ENCODE measurements at regions of chr6 and their contacts with region 1.

Region 1: DNA sequence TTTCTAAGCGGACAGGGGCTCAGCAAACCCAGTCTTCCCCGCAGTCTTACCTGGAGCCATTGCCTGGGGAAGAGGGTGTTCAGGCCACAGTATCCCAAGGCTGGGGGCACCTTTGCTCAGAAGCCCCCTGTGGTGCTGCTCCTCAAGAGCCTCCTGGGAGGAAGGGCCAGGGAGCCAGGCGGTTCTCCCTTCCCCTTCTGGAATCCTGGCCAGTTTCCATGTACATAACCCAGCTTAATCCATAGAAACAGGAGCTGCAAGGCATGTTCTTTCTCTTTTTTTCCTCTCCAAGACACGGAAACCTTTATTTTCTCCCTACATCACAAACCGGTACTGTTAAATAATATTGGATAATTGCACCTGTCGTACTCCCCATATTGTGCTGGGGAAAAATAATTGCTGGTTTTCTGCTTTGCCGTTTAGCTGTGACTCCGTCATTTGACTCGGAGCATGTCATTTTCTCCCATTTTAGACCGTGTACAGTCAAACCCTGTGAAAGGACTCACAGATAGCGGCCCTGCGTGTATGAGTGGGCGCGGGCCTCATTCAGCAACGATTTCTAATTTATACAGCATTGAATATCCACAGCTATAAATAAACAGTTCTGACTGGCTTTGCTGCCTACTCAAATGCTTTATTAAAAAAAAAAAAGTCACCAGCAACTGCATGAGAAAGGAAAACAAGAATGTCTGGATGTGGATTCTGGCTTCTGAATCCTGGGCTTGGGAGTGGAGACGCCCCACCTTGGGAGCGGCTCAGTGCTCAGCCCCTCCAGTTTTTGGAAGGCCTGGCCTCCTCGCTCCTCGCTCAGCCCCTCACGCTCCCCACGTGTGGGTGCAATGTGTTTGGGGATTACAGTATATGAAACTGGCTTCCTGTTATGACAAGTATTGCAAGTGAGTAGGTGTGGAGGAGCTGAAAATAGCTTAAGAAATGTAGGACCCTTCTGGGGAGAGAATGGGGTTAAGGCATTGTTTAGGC is 67.3 kb downstream of the ADTRP start:
- DNase-seq: peak; percentile 30
- H3K4me3 Mint-ChIP-seq: peak overlapping the region; percentile 76
- H3K27ac Mint-ChIP-seq: peak overlapping the region; percentile 97
- H3K4me1 Mint-ChIP-seq: peaks cover 73% of the 10 kb centered on the region
- H3K27me3 Mint-ChIP-seq: no peaks in the 10 kb centered on the region

Region 2: GRCh38 chr6:10747251-10747972 is 963.9 kb before region 1 on chr6 and contains the start of gene TMEM14B:
- intact Hi-C with region 1: loop called (anchors 5 kb)
- DNase-seq: peak; percentile 100
- H3K4me3 Mint-ChIP-seq: peak within 1 kb of the TSS; percentile 93
- H3K27ac Mint-ChIP-seq: peak within 1 kb of the TSS; percentile 94
- H3K4me1 Mint-ChIP-seq: peaks cover 52% of the 10 kb centered on the region
- H3K27me3 Mint-ChIP-seq: no peaks in the 10 kb centered on the region
- total RNA-seq, gene TMEM14B: 82.1 and 83.7 TPM in 2 replicates

Region 3: GRCh38 chr6:11324453-11325015 is 386.8 kb before region 1 on chr6:
- intact Hi-C with region 1: loop called (anchors 5 kb)
- DNase-seq: peak; percentile 54
- H3K4me3 Mint-ChIP-seq: peak overlapping the region; percentile 65
- H3K27ac Mint-ChIP-seq: peak overlapping the region; percentile 97
- H3K4me1 Mint-ChIP-seq: peaks cover 91% of the 10 kb centered on the region
- H3K27me3 Mint-ChIP-seq: no peaks in the 10 kb centered on the region

Region 4: DNA sequence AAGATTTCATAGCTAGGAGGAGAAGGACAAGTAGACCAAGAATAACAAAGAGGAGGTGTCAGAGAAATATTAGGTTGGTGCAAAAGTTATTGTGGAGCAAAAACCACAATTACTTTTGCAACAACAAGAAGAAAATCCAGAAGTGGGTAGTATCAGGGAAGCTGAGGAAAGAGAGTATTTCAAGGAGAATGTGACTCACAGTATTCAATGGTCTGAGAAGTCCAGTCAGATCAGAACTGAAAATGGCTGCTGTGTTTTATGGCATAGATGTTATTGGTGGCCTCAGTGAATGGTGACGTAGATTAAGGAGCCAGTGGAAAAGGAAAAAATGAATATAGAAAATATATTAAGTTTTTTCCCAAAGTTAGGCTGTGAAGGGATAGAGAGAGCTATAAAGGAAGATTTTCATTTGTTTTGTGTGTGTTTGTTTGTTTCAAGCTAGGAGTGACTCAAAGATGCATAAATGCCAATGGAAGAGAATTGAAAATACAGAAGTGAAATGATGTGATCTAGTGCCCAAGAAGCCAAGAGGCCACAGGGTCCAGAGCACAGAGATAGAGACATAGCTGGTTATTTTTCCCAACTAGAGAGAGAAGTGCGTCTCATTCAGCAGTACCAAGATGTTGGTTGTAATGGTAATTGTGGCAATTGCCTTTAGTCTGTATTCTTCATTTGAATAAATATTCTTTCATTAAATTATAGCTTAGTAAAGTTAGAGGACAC is 45.5 kb before region 1 on chr6:
- intact Hi-C with region 1: loop called (anchors 1 kb)
- DNase-seq: no peak
- H3K4me3 Mint-ChIP-seq: no peak overlapping the region
- H3K27ac Mint-ChIP-seq: peak overlapping the region; percentile 14
- H3K4me1 Mint-ChIP-seq: peaks cover 12% of the 10 kb centered on the region
- H3K27me3 Mint-ChIP-seq: peaks cover 7% of the 10 kb centered on the region

Region 5: GRCh38 chr6:11785774-11786579 is 74.7 kb after region 1 on chr6:
- intact Hi-C with region 1: loop called (anchors 1 kb)
- DNase-seq: peak; percentile 64
- H3K4me3 Mint-ChIP-seq: peak overlapping the region; percentile 28
- H3K27ac Mint-ChIP-seq: peak overlapping the region; percentile 85
- H3K4me1 Mint-ChIP-seq: peaks cover 13% of the 10 kb centered on the region
- H3K27me3 Mint-ChIP-seq: no peaks in the 10 kb centered on the region

Region 6: GRCh38 chr6:12011276-12012076 is 300.2 kb after region 1 on chr6:
- intact Hi-C with region 1: loop called (anchors 1 kb)
- DNase-seq: peak; percentile 92
- H3K4me3 Mint-ChIP-seq: peak overlapping the region; percentile 97
- H3K27ac Mint-ChIP-seq: peak overlapping the region; percentile 97
- H3K4me1 Mint-ChIP-seq: peaks cover 62% of the 10 kb centered on the region
- H3K27me3 Mint-ChIP-seq: no peaks in the 10 kb centered on the region

Region 7: GRCh38 chr6:12241493-12242175 is 530.3 kb after region 1 on chr6:
- intact Hi-C with region 1: loop called (anchors 1 kb)
- DNase-seq: no peak
- H3K4me3 Mint-ChIP-seq: no peak overlapping the region
- H3K27ac Mint-ChIP-seq: peak overlapping the region; percentile 31
- H3K4me1 Mint-ChIP-seq: peaks cover 21% of the 10 kb centered on the region
- H3K27me3 Mint-ChIP-seq: peaks cover 6% of the 10 kb centered on the region

Measured in activated T-helper 1 cell treated with anti-CD3 and anti-CD28 coated beads, Interleukin-12 subunit alpha, Interleukin-12 subunit beta, Interleukin-2, Interleukin-4 antibody, amounts not matched to agents 30 ng/mL and 10 ng/mL and 1 ng/mL, durations not matched to agents 14 hours and 24 hours and 36 hours (primary cell).